ENCODE measurements at regions of chr10 and their contacts with region 1.

Region 1: DNA sequence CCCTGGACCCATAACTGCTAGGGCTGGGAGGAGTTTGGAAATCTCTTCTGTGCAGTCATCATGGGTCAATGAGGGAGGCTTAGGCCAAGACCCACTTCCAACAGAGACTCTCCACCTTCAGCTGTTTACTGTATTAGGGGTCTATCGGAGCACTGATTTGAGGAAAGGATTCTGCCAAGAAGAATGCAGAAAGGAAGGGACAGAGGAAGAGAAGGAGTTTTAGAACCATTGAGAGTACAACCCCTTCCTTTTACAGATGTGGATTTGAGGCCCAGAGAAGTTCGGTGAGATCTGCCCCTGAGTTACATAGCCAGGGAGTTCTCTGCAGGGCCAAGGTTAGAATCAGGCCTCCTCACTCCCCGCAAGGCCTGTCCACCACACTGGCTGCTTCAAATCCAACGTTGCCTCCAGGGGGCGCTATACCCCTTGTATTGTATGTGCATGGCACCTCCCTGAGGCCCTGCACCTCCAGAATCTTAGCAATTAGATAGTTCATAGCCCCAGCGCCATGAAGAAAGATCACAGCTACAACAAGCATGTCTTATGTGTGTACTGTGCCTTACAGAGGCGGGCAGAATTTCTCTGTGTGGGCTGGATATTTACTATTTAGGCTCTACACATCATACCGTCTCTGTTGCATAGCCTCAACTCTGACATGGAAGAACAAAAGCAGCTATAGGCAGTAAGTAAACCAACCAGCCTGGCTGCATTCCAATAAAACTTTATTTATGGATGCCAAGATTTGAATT is 246.8 kb downstream of the SKIDA1 start:
- DNase-seq: peak; percentile 90
- ATAC-seq: peak; percentile 98
- H3K4me3 ChIP-seq: no peak overlapping the region
- H3K27ac ChIP-seq: no peak overlapping the region
- H3K4me1 ChIP-seq: peaks cover 8% of the 10 kb centered on the region
- H3K27me3 ChIP-seq: no peaks in the 10 kb centered on the region
- CTCF ChIP-seq: peak; percentile 89

Region 2: GRCh38 chr10:21336476-21337170 is 58.0 kb after region 1 on chr10:
- CTCF ChIA-PET with region 1: no interaction called
- POLR2A ChIA-PET with region 1: no interaction called
- intact Hi-C with region 1: loop called (anchors 5 kb)
- DNase-seq: peak; percentile 94
- ATAC-seq: peak; percentile 72
- H3K4me3 ChIP-seq: peak overlapping the region; percentile 47; the same call in 1 of the 2 replicates
- H3K27ac ChIP-seq: peak overlapping the region; percentile 86
- H3K4me1 ChIP-seq: peaks cover 48% of the 10 kb centered on the region
- H3K27me3 ChIP-seq: no peaks in the 10 kb centered on the region
- CTCF ChIP-seq: no peak

Region 3: GRCh38 chr10:21399392-21400035 is 120.8 kb after region 1 on chr10:
- CTCF ChIA-PET with region 1: no interaction called
- POLR2A ChIA-PET with region 1: no interaction called
- intact Hi-C with region 1: loop called (anchors 10 kb)
- DNase-seq: peak; percentile 85
- ATAC-seq: peak; percentile 40
- H3K4me3 ChIP-seq: no peak overlapping the region
- H3K27ac ChIP-seq: peak overlapping the region; percentile 87
- H3K4me1 ChIP-seq: peaks cover 32% of the 10 kb centered on the region
- H3K27me3 ChIP-seq: no peaks in the 10 kb centered on the region
- CTCF ChIP-seq: no peak

Region 4: GRCh38 chr10:21953585-21954057 is 675.0 kb after region 1 on chr10:
- CTCF ChIA-PET with region 1: no interaction called
- POLR2A ChIA-PET with region 1: no interaction called
- intact Hi-C with region 1: loop called (anchors 10 kb)
- DNase-seq: peak; percentile 43
- ATAC-seq: peak; percentile 55
- H3K4me3 ChIP-seq: no peak overlapping the region
- H3K27ac ChIP-seq: no peak overlapping the region
- H3K4me1 ChIP-seq: no peaks in the 10 kb centered on the region
- H3K27me3 ChIP-seq: no peaks in the 10 kb centered on the region
- CTCF ChIP-seq: peak; percentile 50

Measured in PC-3 (cell line).